ENCODE measurements at regions of chr11 and their contacts with region 1.

Region 1: GRCh38 chr11:2151500-2152257 is 9.3 kb downstream of the INS start:
- DNase-seq: peak; percentile 87
- ATAC-seq: peak; percentile 70
- H3K4me3 Mint-ChIP-seq: no peak overlapping the region
- H3K27ac Mint-ChIP-seq: no peak overlapping the region
- H3K4me1 Mint-ChIP-seq: peaks cover 5% of the 10 kb centered on the region
- H3K27me3 Mint-ChIP-seq: peaks cover 27% of the 10 kb centered on the region

Region 2: DNA sequence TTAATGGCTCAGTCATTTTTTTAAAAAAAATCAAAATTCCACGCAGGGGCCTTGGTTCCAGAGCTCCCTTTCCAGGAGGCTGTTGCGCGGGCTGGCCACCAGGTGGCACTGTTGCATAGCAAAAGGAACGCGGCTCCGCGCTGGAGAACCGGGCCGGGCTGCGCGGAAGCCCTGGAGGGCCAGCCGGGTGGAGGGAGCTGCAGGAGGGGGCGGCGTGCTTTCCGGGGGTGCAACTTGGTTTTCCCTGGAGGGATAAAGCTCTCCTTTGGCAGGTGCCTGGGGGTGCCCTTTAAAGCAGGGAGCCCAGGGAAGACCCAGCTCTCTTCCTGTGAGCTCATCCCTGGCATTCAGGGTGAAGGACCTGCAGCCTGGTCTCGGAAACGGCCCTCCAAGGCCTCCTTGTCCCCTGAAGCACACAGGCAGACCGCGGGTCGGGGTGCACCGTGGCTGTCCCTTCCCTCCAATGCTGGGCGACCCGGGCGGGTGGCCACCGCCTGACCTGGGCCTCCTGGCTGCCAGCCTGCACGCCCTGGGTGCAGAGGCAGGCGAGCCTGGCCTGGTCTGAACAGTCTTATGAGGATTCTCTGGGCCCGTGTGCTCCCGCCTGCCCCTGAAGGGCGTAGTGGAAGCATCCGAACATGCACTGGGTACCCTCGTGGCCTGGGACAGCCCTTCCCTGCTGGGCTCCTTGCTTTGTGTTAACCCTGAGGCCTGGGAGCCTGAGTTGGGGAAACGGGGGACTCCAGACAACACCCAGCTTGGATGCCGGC is 498.7 kb before region 1 on chr11:
- CTCF ChIA-PET with region 1: interaction called, 12 read pairs
- POLR2A ChIA-PET with region 1: interaction called, 3 read pairs
- DNase-seq: peak; percentile 81
- ATAC-seq: peak; percentile 84
- H3K4me3 Mint-ChIP-seq: no peak overlapping the region
- H3K27ac Mint-ChIP-seq: no peak overlapping the region
- H3K4me1 Mint-ChIP-seq: no peaks in the 10 kb centered on the region
- H3K27me3 Mint-ChIP-seq: peaks cover 13% of the 10 kb centered on the region

Region 3: DNA sequence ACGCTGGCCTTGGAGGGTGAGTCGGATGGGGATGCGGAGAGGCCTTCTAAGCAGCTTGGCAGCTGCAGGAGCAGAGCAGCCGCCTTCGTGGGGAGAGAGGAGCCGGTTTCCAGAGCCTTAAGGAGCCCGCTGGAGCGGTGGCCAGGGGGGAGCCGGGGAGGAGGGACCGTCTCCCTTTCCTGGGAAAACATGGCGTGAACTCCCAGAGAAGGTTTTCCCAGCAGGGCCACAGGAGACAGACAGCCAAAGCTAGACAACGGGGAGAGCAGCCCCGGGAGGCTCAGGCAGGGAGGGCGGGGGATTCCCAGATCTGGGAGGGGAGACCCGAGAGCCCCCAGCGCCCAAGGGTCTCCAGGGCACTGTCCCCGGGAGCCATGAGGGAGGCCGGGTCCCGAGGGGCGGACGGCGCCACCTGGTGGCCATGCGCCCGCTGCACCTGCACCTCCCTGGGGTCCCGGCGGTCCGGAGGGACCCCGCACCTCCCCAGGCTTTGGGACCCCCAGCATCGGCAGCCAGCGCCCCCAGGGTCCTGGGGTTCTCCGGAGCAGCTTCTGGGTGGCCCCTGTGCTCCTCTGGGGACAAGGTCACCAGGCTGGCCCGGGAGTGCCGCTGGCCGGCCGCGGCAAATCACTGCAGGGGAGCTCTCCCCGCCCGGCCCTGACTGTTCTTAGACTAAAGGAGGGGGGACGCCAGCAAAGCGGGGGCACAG is 319.3 kb before region 1 on chr11:
- CTCF ChIA-PET with region 1: interaction called, 18 read pairs
- POLR2A ChIA-PET with region 1: no interaction called
- DNase-seq: peak; percentile 68
- ATAC-seq: peak; percentile 71
- H3K4me3 Mint-ChIP-seq: no peak overlapping the region
- H3K27ac Mint-ChIP-seq: no peak overlapping the region
- H3K4me1 Mint-ChIP-seq: no peaks in the 10 kb centered on the region
- H3K27me3 Mint-ChIP-seq: peaks cover 4% of the 10 kb centered on the region

Region 4: DNA sequence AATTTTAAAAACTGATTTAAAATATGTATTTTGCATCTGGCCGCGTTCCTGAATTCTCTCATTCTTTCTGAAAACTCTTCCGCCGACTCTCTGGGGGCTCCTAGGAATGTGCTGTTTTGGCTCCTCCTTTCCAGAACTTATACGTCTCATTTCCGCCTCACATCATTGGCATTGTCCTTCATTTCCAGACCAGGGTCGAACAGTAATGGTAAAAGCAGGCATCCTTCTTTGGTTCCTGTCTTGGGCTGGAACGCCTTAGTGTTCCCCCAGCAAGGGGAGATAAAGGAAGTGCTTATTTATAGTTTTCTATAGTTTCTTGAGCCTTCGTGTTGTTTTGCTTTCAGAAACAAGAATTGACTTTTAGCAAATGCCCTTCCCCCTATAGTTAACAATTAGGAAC is 243.1 kb before region 1 on chr11:
- CTCF ChIA-PET with region 1: interaction called, 10 read pairs
- POLR2A ChIA-PET with region 1: no interaction called
- DNase-seq: no peak
- ATAC-seq: no peak
- H3K4me3 Mint-ChIP-seq: no peak overlapping the region
- H3K27ac Mint-ChIP-seq: no peak overlapping the region
- H3K4me1 Mint-ChIP-seq: no peaks in the 10 kb centered on the region
- H3K27me3 Mint-ChIP-seq: peaks cover 10% of the 10 kb centered on the region

Region 5: DNA sequence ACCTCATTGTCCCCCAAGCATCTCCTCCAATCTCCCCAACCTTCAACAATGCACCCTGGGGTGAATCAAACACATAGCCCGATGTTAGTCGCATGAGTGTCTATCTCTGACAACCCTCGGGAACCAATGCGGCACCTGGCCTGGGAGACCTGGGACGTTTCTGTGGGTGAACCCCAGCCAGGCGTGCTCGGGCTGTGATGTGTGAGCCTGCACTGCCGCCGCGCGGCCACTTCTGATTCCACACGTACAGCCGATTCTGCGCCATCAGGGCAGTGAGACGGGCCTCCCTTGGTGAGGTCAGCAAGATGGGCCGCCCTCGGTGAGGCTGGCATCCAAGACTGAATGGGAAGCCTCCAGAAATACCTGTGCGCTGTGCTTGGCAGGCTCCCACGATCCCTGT is 148.9 kb before region 1 on chr11:
- CTCF ChIA-PET with region 1: interaction called, 15 read pairs
- POLR2A ChIA-PET with region 1: no interaction called
- DNase-seq: no peak
- ATAC-seq: peak; percentile 57
- H3K4me3 Mint-ChIP-seq: no peak overlapping the region
- H3K27ac Mint-ChIP-seq: no peak overlapping the region
- H3K4me1 Mint-ChIP-seq: no peaks in the 10 kb centered on the region
- H3K27me3 Mint-ChIP-seq: no peaks in the 10 kb centered on the region

Region 6: DNA sequence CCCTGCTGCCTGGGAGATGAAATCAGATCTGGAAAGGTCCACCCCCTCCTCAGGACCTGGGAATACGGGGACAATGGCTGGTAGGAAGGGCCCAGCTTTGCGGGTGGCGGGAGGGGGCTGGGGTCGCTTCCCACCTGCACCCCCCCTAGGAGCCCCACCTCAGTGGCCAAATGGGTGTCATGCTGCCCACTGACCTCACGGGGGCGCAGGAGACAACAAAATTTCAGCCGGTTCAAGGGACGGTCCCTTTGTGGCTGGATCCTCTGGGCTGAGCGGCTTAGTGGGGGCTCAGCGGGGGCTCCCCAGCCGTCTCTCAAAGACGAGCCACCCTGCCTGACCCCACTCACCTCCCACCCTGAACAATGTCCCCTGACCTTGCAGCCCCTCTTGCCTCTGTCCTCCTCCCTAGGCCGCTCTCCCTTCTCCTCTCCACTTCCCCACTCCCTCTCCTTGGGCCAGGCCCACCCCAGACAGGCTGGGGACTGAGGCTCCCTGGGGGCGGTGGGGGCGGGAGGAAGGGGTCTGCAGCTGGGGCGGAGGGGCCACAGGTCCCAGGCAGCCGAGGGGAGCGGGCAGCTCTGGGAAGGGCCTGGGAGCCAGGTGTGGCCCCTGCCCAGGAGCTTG is 114.7 kb before region 1 on chr11:
- CTCF ChIA-PET with region 1: interaction called, 261 read pairs
- POLR2A ChIA-PET with region 1: interaction called, 3 read pairs
- DNase-seq: no peak
- ATAC-seq: no peak
- H3K4me3 Mint-ChIP-seq: no peak overlapping the region
- H3K27ac Mint-ChIP-seq: no peak overlapping the region
- H3K4me1 Mint-ChIP-seq: no peaks in the 10 kb centered on the region
- H3K27me3 Mint-ChIP-seq: no peaks in the 10 kb centered on the region

Measured in activated CD8-positive, alpha-beta T cell treated with anti-CD3 and anti-CD28 coated beads, Interleukin-2, amount 10 ng/mL, durations not matched to agents 7 days and 5 days (primary cell).